ENCODE measurements at regions of chr13 and their contacts with region 1.

Region 1: GRCh38 chr13:40682449-40683240 is 16.2 kb upstream of the FOXO1 start:
- DNase-seq: no peak
- H3K4me3 ChIP-seq: no peak overlapping the region
- H3K27ac ChIP-seq: no peak overlapping the region
- H3K4me1 ChIP-seq: peaks cover 0 to 24% (median 13%) of the 10 kb centered on the region in 6 donors
- H3K27me3 ChIP-seq: no peaks in the 10 kb centered on the region
- CTCF ChIP-seq: peak; percentile 40 to 78 (median 65)
- POLR2A ChIP-seq: no peak

Region 2: GRCh38 chr13:39684531-39685137 is 998.0 kb before region 1 on chr13:
- intact Hi-C with region 1: loop called (anchors 5 kb)
- DNase-seq: no peak
- H3K4me3 ChIP-seq: no peak overlapping the region
- H3K27ac ChIP-seq: no peak overlapping the region
- H3K4me1 ChIP-seq: peaks cover 0 to 12% (median 0%) of the 10 kb centered on the region in 6 donors
- H3K27me3 ChIP-seq: no peaks in the 10 kb centered on the region
- CTCF ChIP-seq: peak in 9 of 11 experiments; percentile 13 to 70 (median 51)
- POLR2A ChIP-seq: no peak

Region 3: GRCh38 chr13:39765801-39766463 is 916.7 kb before region 1 on chr13:
- intact Hi-C with region 1: loop called (anchors 10 kb)
- DNase-seq: no peak
- H3K4me3 ChIP-seq: no peak overlapping the region
- H3K27ac ChIP-seq: no peak overlapping the region
- H3K4me1 ChIP-seq: peaks cover 0 to 8% (median 4%) of the 10 kb centered on the region in 6 donors
- H3K27me3 ChIP-seq: no peaks in the 10 kb centered on the region
- CTCF ChIP-seq: peak in 5 of 11 experiments; percentile 13 to 48 (median 22)
- POLR2A ChIP-seq: no peak

Region 4: GRCh38 chr13:39942552-39943273 is 739.9 kb before region 1 on chr13:
- intact Hi-C with region 1: loop called (anchors 5 kb)
- DNase-seq: peak; percentile 87
- H3K4me3 ChIP-seq: no peak overlapping the region
- H3K27ac ChIP-seq: no peak overlapping the region
- H3K4me1 ChIP-seq: peaks cover 0 to 12% (median 4%) of the 10 kb centered on the region in 6 donors
- H3K27me3 ChIP-seq: no peaks in the 10 kb centered on the region
- CTCF ChIP-seq: peak; percentile 36 to 87 (median 84)
- POLR2A ChIP-seq: no peak

Region 5: DNA sequence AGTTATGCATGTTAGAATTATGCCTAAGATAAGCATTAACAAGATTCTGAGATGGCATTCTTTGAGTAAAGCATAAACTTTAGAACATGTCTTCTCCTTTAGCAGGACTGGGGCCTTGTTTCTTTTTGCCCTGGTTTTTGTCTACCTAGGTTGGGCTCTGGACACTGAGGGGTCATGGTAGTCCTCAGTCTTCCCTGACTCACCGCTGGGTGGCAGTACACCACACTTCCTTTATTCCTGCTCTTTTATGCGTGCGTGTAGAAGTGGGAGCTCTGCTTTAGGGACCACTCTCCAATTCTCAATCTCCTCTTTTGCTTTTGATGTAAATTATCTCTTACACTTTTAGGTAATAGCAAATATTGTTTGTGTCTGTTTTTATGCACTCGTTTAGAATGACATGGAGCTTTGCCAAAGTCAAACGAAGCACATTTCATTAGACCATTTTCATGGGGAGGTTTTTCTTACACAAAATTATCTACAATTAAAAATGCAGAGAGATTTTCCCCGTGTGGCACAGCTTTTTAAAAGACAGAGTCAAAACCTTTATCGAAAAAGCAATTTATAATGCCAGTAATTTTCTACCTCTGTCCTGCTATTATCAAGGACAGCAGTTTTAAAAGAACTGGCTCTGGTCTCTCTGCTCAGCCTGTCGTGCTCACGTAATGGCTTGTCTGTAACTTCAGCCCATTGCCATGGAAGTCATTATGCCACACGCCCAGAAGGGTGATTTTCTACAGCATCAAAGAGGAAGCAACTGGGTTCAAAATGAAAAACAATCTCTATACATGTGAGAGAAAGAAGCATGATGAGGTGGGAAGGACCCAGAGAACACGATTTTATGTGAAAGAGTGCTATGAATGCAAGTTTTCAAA is 613.2 kb before region 1 on chr13:
- intact Hi-C with region 1: loop called (anchors 5 kb)
- DNase-seq: peak; percentile 85
- H3K4me3 ChIP-seq: no peak overlapping the region
- H3K27ac ChIP-seq: peak overlapping the region in 2 of 8 donors; percentile 6 to 35
- H3K4me1 ChIP-seq: peaks cover 0 to 19% (median 8%) of the 10 kb centered on the region in 6 donors
- H3K27me3 ChIP-seq: no peaks in the 10 kb centered on the region
- CTCF ChIP-seq: peak; percentile 72 to 93 (median 87)
- POLR2A ChIP-seq: no peak

Measured in spleen (tissue), 13 donors.